ENCODE measurements at regions of chr7 and their contacts with region 1.

Region 1: DNA sequence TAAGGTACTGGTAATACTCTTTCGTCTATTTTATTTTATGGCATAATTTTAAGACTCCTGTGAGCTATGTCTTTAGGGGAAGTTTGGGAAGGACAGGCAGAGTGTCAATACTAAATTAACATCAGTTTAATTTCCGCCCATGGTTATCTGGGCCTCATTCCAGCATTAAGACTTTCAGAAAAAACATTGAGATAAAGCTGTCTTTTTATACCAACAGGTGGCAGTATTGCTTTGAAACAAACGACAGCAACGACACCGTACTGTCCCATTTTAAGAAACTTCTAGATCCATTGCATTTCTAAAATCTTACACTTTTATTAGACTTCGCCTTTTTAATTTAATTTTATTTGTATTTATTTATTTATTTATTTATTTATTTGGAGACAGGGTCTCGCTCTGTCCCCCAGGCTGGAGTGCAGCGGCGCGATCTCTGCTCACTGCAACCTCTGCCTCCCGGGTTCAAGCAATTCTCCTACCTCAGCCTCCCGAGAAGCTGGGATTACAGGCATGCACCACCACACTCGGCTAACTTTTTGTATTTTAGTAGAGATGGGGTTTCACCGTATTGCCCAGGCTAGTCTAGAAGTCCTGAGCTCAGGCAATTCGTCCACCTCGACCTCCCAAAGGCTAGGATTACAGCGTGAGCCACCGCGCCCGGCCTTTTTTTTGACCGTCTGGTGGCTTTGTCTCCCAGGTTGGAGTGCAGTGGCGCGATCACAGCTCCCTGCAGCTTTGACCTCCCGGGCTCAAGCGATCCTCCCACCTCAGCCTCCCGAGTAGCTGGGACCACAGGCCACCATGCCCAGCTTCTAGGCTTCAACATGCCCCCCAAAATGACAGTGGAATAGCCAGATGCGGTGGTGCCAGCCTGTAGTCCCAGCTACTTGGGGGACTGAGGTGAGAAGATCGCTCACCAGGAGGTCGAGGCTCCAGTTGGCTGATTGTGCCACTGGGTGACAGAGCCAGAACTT is 78.7 kb upstream of the C1GALT1 start:
- DNase-seq: peak; percentile 77
- ATAC-seq: peak; percentile 69
- H3K4me3 ChIP-seq: no peak overlapping the region
- H3K4me3 Mint-ChIP-seq: no peak overlapping the region
- H3K27ac ChIP-seq: no peak overlapping the region
- H3K27ac Mint-ChIP-seq: peak overlapping the region; percentile 23
- H3K4me1 ChIP-seq: no peaks in the 10 kb centered on the region
- H3K4me1 Mint-ChIP-seq: peaks cover 5% of the 10 kb centered on the region
- H3K27me3 ChIP-seq: no peaks in the 10 kb centered on the region
- H3K27me3 Mint-ChIP-seq: peaks cover 6% of the 10 kb centered on the region
- CTCF ChIP-seq: peak; percentile 81

Region 2: DNA sequence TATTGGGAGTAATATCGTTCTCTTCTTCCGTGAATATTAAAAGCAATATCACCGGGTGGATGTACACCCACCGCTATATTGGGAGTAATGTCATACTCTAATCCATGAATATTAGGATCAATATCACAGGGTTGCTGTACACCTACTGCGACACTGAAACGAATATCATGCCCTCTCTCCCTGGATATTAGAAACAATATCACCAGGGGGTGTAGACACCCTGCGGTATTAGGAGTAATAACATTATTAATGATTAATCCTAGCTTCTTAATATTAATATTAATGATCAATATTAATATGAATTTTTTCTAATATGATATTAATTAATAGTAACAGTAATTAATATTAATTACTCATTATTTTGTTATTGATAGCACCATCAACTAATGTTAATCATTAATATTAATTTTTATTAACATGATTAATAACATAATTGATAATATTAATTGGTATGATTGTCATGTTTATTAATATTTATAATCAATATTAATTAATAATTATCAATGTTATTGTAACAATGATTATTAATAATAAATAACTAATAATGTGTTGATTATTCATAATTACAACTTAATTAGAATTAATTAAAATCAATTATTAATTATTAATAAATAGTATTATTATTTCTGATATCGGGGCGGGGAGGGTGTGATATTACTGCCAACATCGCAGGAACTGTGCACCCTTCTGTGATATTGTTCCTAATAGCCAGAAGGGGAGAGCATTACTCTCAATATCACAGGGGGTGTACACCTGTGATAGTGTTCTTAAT is 42.6 kb before region 1 on chr7:
- CTCF ChIA-PET with region 1: no interaction called
- POLR2A ChIA-PET with region 1: no interaction called
- intact Hi-C with region 1: no loop called
- DNase-seq: no peak
- ATAC-seq: no peak
- H3K4me3 ChIP-seq: no peak overlapping the region
- H3K4me3 Mint-ChIP-seq: no peak overlapping the region
- H3K27ac ChIP-seq: no peak overlapping the region
- H3K27ac Mint-ChIP-seq: no peak overlapping the region
- H3K4me1 ChIP-seq: no peaks in the 10 kb centered on the region
- H3K4me1 Mint-ChIP-seq: no peaks in the 10 kb centered on the region
- H3K27me3 ChIP-seq: peaks cover 0 to 9% (median 2%) of the 10 kb centered on the region in 4 experiments
- H3K27me3 Mint-ChIP-seq: peaks cover 31% of the 10 kb centered on the region
- CTCF ChIP-seq: no peak

Region 3: GRCh38 chr7:7090460-7090859 is 13.2 kb before region 1 on chr7:
- CTCF ChIA-PET with region 1: interaction called, 35 read pairs
- POLR2A ChIA-PET with region 1: no interaction called
- intact Hi-C with region 1: no loop called
- DNase-seq: no peak
- ATAC-seq: no peak
- H3K4me3 ChIP-seq: no peak overlapping the region
- H3K4me3 Mint-ChIP-seq: no peak overlapping the region
- H3K27ac ChIP-seq: no peak overlapping the region
- H3K27ac Mint-ChIP-seq: no peak overlapping the region
- H3K4me1 ChIP-seq: no peaks in the 10 kb centered on the region
- H3K4me1 Mint-ChIP-seq: no peaks in the 10 kb centered on the region
- H3K27me3 ChIP-seq: peaks cover 0 to 12% (median 4%) of the 10 kb centered on the region in 4 experiments
- H3K27me3 Mint-ChIP-seq: peaks cover 44% of the 10 kb centered on the region
- CTCF ChIP-seq: no peak

Region 4: GRCh38 chr7:7157177-7157886 is 53.7 kb after region 1 on chr7:
- CTCF ChIA-PET with region 1: interaction called, 8 read pairs
- POLR2A ChIA-PET with region 1: no interaction called
- intact Hi-C with region 1: loop called (anchors 2 kb)
- DNase-seq: peak; percentile 68
- ATAC-seq: peak; percentile 91
- H3K4me3 ChIP-seq: peak overlapping the region; percentile 49 to 90 (median 61)
- H3K4me3 Mint-ChIP-seq: peak overlapping the region; percentile 90
- H3K27ac ChIP-seq: peak overlapping the region; percentile 64 to 80
- H3K27ac Mint-ChIP-seq: peak overlapping the region; percentile 94
- H3K4me1 ChIP-seq: peaks cover 33 to 34% of the 10 kb centered on the region in 2 donors
- H3K4me1 Mint-ChIP-seq: peaks cover 57% of the 10 kb centered on the region
- H3K27me3 ChIP-seq: no peaks in the 10 kb centered on the region
- H3K27me3 Mint-ChIP-seq: no peaks in the 10 kb centered on the region
- CTCF ChIP-seq: no peak

Region 5: DNA sequence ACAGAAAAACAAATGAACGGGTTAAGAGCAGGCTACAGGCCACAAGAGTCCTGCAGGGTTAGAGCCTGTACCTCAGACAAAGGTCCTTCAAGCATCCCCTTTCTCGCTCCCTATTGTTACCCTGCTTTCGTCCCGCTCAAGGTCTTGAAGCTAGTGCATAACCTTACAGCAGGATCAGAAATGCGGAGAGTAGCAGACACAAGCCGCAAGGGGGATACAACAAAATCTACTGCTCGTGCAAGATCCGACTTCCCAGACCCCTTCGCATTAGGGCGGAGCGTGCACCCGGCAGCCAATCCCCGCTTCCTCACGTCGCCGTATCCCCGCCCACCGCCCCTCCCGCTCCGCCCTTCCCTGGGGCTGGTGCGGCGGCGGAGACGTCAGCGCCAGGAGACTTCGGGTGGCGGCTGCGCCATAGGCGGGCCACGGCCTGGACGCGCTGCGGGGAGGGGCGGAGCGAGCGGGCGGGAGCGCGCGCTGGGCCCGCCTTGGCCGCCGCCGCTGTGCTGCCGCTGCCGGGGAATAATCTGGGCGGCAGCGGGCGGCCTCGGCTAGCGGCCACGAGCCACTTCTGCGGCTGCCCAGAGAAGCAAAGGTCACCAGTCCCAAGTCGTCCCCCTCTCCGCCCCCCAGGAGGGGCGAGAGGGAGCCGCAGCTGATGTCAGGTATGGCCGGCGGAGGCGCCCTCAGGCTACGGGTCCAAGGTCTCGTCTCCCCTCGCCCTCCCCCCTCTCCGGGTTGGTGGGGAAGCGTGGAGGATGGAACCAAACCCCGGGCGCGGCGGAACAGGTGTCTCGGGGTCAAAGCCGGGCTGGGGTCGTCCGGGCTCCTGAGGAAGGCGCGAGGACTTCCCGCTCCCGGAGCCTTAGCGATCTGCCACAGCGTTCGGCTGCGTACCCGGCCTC is 78.8 kb after region 1 on chr7 and contains the start of gene C1GALT1:
- CTCF ChIA-PET with region 1: interaction called, 94 read pairs
- POLR2A ChIA-PET with region 1: interaction called, 4 read pairs
- intact Hi-C with region 1: loop called (anchors 1 kb)
- DNase-seq: peak; percentile 99
- ATAC-seq: peak; percentile 79
- H3K4me3 ChIP-seq: peak within 1 kb of the TSS; percentile 85 to 97 (median 91)
- H3K4me3 Mint-ChIP-seq: peak within 1 kb of the TSS; percentile 97
- H3K27ac ChIP-seq: peak within 1 kb of the TSS; percentile 89 to 93
- H3K27ac Mint-ChIP-seq: peak within 1 kb of the TSS; percentile 98
- H3K4me1 ChIP-seq: peaks cover 29 to 41% of the 10 kb centered on the region in 2 donors
- H3K4me1 Mint-ChIP-seq: peaks cover 30% of the 10 kb centered on the region
- H3K27me3 ChIP-seq: no peaks in the 10 kb centered on the region
- H3K27me3 Mint-ChIP-seq: no peaks in the 10 kb centered on the region
- CTCF ChIP-seq: peak; percentile 64
- total RNA-seq, gene C1GALT1: 59.8 and 66.8 TPM in 2 replicates

Region 6: GRCh38 chr7:7535691-7536090 is 432.1 kb after region 1 on chr7 and contains the start of gene COL28A1:
- CTCF ChIA-PET with region 1: interaction called, 115 read pairs
- POLR2A ChIA-PET with region 1: no interaction called
- intact Hi-C with region 1: loop called (anchors 2 kb)
- DNase-seq: no peak
- ATAC-seq: no peak
- H3K4me3 ChIP-seq: no peak within 1 kb of the TSS
- H3K4me3 Mint-ChIP-seq: no peak within 1 kb of the TSS
- H3K27ac ChIP-seq: no peak within 1 kb of the TSS
- H3K27ac Mint-ChIP-seq: no peak within 1 kb of the TSS
- H3K4me1 ChIP-seq: no peaks in the 10 kb centered on the region
- H3K4me1 Mint-ChIP-seq: no peaks in the 10 kb centered on the region
- H3K27me3 ChIP-seq: peaks cover 0 to 7% (median 2%) of the 10 kb centered on the region in 4 experiments
- H3K27me3 Mint-ChIP-seq: peaks cover 4% of the 10 kb centered on the region
- CTCF ChIP-seq: no peak
- total RNA-seq, gene COL28A1: 0.49 and 0.67 TPM in 2 replicates

Region 7: DNA sequence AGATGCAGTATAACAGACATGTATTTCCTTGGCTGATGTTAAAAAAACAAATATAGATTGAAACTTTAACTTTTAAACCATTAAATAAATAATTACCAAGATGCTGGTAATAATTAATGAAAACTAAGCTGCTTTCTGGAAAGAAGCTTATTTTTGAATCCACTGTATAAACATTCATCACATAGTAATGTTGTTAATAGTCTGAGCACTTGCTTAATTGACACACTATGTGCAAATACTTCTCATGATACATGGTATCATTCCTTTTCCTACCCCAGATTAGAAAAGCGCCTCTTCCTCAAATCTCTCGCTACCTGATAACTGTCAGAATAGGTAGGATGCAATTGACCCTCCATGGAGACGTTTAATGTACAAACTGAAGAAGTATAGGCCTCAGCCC is 447.0 kb after region 1 on chr7:
- CTCF ChIA-PET with region 1: interaction called, 10 read pairs
- POLR2A ChIA-PET with region 1: no interaction called
- intact Hi-C with region 1: no loop called
- DNase-seq: no peak
- ATAC-seq: no peak
- H3K4me3 ChIP-seq: no peak overlapping the region
- H3K4me3 Mint-ChIP-seq: no peak overlapping the region
- H3K27ac ChIP-seq: no peak overlapping the region
- H3K27ac Mint-ChIP-seq: no peak overlapping the region
- H3K4me1 ChIP-seq: no peaks in the 10 kb centered on the region
- H3K4me1 Mint-ChIP-seq: no peaks in the 10 kb centered on the region
- H3K27me3 ChIP-seq: no peaks in the 10 kb centered on the region
- H3K27me3 Mint-ChIP-seq: no peaks in the 10 kb centered on the region
- CTCF ChIP-seq: no peak

Region 8: DNA sequence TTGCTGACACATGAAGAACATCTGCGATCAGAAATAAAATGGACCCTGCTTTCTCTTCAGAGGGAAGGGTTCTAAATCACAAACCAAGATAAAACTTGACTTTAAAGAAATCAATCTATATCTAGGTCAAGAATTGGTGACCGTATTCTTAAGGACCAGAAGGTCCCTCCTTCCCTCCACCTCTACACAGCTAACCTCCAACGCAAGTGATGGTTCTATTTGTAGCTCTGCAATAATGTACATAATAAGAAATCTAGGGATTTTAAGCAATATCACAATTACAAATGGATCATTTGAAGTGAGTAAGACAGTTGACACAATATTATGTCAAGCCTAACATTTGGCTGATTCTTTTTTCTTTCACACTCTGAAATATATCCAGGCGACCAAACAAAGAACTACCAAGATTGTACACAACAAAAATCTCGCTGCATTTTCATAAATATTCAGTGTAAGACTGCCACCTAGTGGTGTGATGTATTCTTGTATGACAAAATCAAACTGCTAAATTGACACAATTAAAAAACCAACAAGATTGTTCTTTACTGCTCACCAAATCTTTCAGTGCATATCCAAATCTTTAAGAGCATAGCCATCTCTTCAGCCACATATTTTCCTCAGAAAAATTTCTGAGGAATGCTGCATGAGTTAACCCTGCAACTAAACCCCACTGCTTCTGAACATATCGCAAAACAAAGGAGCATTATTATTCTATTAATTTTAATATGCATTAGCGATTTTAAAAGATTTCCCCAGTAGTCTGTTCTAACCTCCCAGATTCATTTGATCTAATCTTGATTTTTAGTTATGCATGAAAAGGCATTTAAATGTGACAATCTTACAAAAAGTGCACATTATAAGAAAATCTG is 1113.8 kb after region 1 on chr7:
- CTCF ChIA-PET with region 1: interaction called, 5 read pairs
- POLR2A ChIA-PET with region 1: no interaction called
- intact Hi-C with region 1: loop called (anchors 2 kb)
- DNase-seq: peak; percentile 78
- ATAC-seq: peak; percentile 57
- H3K4me3 ChIP-seq: no peak overlapping the region
- H3K4me3 Mint-ChIP-seq: no peak overlapping the region
- H3K27ac ChIP-seq: no peak overlapping the region
- H3K27ac Mint-ChIP-seq: no peak overlapping the region
- H3K4me1 ChIP-seq: no peaks in the 10 kb centered on the region
- H3K4me1 Mint-ChIP-seq: peaks cover 2% of the 10 kb centered on the region
- H3K27me3 ChIP-seq: no peaks in the 10 kb centered on the region
- H3K27me3 Mint-ChIP-seq: no peaks in the 10 kb centered on the region
- CTCF ChIP-seq: peak; percentile 81